ENCODE measurements at regions of chr16 and their contacts with region 1.

Region 1: GRCh38 chr16:31073968-31074813 is at the starts of genes ZNF646 and ZNF668:
- DNase-seq: peak; percentile 99
- ATAC-seq: peak; percentile 86
- H3K4me3 ChIP-seq: peak within 1 kb of the TSS; percentile 73 to 99 (median 91)
- H3K4me3 Mint-ChIP-seq: peak within 1 kb of the TSS; percentile 95
- H3K27ac ChIP-seq: peak within 1 kb of the TSS; percentile 78 to 89
- H3K27ac Mint-ChIP-seq: peak within 1 kb of the TSS; percentile 96
- H3K4me1 ChIP-seq: peaks cover 20 to 25% of the 10 kb centered on the region in 2 donors
- H3K4me1 Mint-ChIP-seq: peaks cover 36% of the 10 kb centered on the region
- H3K27me3 ChIP-seq: no peaks in the 10 kb centered on the region
- H3K27me3 Mint-ChIP-seq: no peaks in the 10 kb centered on the region
- CTCF ChIP-seq: no peak
- total RNA-seq, gene ZNF646: 45.9 and 51.7 TPM in 2 replicates
- total RNA-seq, gene ZNF668: 11.1 and 12.0 TPM in 2 replicates

Region 2: DNA sequence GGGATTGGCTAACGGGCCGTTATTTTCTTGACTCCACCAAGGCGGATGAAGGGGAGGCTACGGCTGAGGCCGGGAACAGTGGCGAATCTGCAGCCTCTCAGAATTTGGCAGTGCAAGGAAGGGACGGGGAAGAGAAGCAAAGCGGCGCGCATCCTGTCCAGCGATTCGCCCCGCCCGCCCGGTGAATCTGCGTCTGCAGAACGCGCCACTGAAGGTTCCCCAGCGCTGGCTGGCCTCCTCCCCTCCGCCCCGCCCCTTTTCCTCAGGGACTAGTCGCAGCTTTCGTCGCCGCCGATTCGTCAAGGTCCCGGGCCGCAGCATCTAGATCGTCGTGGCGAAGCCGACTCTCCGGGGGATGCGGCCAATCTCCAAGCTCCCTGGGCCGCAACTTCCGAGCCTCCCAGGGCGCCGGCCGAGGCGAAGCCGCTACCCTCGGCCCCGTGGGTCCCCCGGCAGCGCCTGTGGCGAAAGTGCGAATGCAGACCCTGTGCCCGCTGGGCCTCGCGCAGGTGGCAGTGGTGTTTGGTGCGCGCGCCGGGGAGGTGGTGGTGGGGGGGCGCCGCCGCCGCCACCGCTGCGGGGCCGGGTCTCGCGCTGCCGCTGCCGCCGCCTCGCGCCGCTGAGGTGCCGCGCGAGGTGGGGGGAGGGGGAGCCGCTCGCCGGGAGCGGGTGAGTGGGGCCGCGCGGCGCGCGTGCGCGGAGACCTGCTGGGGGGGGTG is 116.6 kb before region 1 on chr16 and contains the start of gene SETD1A:
- CTCF ChIA-PET with region 1: no interaction called
- POLR2A ChIA-PET with region 1: interaction called, 5 read pairs
- intact Hi-C with region 1: loop called (anchors 1 kb)
- DNase-seq: peak; percentile 99
- ATAC-seq: peak; percentile 83
- H3K4me3 ChIP-seq: peak within 1 kb of the TSS; percentile 85 to 99 (median 95)
- H3K4me3 Mint-ChIP-seq: peak within 1 kb of the TSS; percentile 97
- H3K27ac ChIP-seq: peak within 1 kb of the TSS; percentile 92 to 96
- H3K27ac Mint-ChIP-seq: peak within 1 kb of the TSS; percentile 99
- H3K4me1 ChIP-seq: peaks cover 15 to 25% of the 10 kb centered on the region in 2 donors
- H3K4me1 Mint-ChIP-seq: peaks cover 40% of the 10 kb centered on the region
- H3K27me3 ChIP-seq: no peaks in the 10 kb centered on the region
- H3K27me3 Mint-ChIP-seq: no peaks in the 10 kb centered on the region
- CTCF ChIP-seq: no peak
- total RNA-seq, gene SETD1A: 37.2 and 39.5 TPM in 2 replicates

Region 3: DNA sequence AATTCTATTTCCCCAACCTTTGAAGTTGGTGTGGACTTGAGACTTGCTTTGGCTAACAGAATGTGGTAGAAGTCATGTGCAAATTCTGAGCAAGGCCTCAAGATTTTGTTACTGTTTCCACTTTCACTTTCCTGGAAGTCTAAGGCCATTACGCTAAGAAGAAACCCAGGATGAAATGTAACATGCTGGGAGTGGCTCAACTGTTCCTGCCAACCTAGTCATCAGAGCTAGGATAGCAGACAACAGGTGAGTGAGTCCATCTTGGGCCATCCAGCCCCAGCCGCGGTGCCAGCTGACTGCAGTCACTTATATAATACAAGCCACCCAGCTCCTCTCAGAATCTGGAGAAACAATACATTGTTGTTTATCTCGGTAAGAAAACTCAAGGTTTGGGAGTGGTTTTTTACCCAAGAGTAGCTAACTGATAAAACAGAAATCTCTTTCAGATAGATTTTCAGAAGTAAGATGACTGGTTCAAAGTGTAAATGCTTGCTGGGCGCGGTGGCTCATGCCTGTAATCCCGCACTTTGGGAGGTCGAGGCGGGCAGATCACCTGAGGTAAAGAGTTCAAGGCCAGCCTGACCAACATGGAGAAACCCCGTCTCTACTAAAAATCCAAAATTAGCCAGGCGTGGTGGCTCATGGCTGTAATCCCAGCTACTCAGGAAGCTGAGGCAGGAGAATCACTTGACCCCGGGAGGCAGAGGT is 51.5 kb before region 1 on chr16:
- CTCF ChIA-PET with region 1: no interaction called
- POLR2A ChIA-PET with region 1: no interaction called
- intact Hi-C with region 1: no loop called
- DNase-seq: no peak
- ATAC-seq: no peak
- H3K4me3 ChIP-seq: no peak overlapping the region
- H3K4me3 Mint-ChIP-seq: no peak overlapping the region
- H3K27ac ChIP-seq: no peak overlapping the region
- H3K27ac Mint-ChIP-seq: no peak overlapping the region
- H3K4me1 ChIP-seq: no peaks in the 10 kb centered on the region
- H3K4me1 Mint-ChIP-seq: no peaks in the 10 kb centered on the region
- H3K27me3 ChIP-seq: no peaks in the 10 kb centered on the region
- H3K27me3 Mint-ChIP-seq: peaks cover 3% of the 10 kb centered on the region
- CTCF ChIP-seq: no peak

Region 4: DNA sequence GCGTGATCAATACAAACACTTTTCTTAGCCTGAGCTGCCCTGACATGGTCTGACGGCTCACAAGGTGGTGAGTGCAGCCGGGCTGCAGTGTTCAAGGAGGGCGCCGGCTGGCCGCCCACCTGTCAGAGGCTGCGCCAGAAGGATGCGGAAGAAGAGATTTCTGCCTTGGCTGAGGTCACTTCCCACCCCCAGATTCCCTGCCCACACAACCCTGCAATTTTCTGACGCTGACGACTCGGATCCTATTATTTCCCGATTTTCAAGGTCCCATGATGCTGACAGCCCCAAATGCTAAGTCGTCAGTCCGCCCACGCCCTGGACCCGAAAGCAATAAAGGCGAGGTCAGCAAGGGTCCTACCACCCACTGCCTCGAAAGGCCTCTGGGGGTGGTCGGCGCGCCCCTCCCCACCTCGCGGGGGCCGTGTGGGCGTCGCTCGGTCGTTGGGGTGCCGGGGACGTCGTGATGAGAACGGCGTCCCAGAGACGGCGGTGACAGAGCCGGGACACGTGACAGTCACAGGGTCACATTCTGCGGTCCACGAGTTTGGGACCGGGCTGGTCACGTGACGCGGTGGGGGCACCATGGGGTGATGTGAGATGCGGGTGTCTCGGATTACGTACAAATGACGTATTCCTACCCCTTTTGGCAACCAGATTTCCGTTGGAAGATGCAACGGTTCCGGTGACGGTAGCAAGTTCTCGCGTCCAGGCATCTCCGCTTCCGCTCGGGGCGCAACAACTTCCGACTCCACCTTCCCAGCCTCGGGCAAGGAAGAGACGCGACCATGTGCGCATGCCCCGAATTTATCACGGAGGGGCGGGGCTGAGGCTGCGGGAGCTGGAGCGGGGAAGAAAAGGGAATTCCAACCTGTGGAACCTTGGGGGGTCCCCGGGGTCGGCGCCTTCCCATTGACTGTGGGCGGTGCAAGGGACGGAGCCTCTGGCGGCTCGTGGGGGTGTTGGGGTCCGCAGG is 41.2 kb before region 1 on chr16 and contains the start of gene STX4:
- CTCF ChIA-PET with region 1: interaction called, 5 read pairs
- POLR2A ChIA-PET with region 1: interaction called, 14 read pairs
- intact Hi-C with region 1: loop called (anchors 1 kb)
- DNase-seq: peak; percentile 100
- ATAC-seq: peak; percentile 76
- H3K4me3 ChIP-seq: peak within 1 kb of the TSS; percentile 76 to 99 (median 90)
- H3K4me3 Mint-ChIP-seq: peak within 1 kb of the TSS; percentile 95
- H3K27ac ChIP-seq: peak within 1 kb of the TSS; percentile 99 to 100
- H3K27ac Mint-ChIP-seq: peak within 1 kb of the TSS; percentile 99
- H3K4me1 ChIP-seq: peaks cover 8 to 16% of the 10 kb centered on the region in 2 donors
- H3K4me1 Mint-ChIP-seq: peaks cover 21% of the 10 kb centered on the region
- H3K27me3 ChIP-seq: no peaks in the 10 kb centered on the region
- H3K27me3 Mint-ChIP-seq: no peaks in the 10 kb centered on the region
- CTCF ChIP-seq: no peak
- total RNA-seq, gene STX4: 111 and 120 TPM in 2 replicates

Region 5: GRCh38 chr16:31108035-31108793 is 34.0 kb after region 1 on chr16 and contains the start of gene BCKDK:
- CTCF ChIA-PET with region 1: no interaction called
- POLR2A ChIA-PET with region 1: no interaction called
- intact Hi-C with region 1: loop called (anchors 2 kb)
- DNase-seq: peak; percentile 74
- ATAC-seq: peak; percentile 77
- H3K4me3 ChIP-seq: peak within 1 kb of the TSS; percentile 41 to 82 (median 78)
- H3K4me3 Mint-ChIP-seq: peak within 1 kb of the TSS; percentile 91
- H3K27ac ChIP-seq: peak within 1 kb of the TSS in 1 of 2 donors; percentile 72
- H3K27ac Mint-ChIP-seq: peak within 1 kb of the TSS; percentile 82
- H3K4me1 ChIP-seq: peaks cover 7 to 18% of the 10 kb centered on the region in 2 donors
- H3K4me1 Mint-ChIP-seq: peaks cover 21% of the 10 kb centered on the region
- H3K27me3 ChIP-seq: no peaks in the 10 kb centered on the region
- H3K27me3 Mint-ChIP-seq: no peaks in the 10 kb centered on the region
- CTCF ChIP-seq: no peak
- total RNA-seq, gene BCKDK: 24.7 and 29.7 TPM in 2 replicates